ENCODE measurements at regions of chr20 and their contacts with region 1.

Region 1: DNA sequence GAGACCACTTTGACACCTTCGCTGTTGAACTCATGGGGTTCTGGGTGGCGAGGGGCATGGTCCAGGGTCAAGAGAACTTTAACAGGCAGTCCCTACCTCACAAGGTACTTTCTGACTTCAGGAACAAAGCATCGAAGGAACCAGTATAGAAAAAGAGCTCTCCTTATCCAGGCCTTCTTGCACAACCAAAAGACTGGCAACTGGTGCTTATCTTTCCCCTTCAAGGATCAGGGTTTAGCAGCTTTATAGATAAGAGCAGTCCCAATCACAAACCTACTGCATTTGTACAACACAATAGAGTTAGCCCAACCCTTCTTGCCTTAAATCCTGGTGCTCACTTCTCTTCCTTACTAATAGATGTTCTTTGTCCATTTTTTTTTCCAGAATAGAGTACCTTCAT is 116.3 kb downstream of the SNX5 start:
- DNase-seq: no peak
- H3K4me3 ChIP-seq: no peak overlapping the region
- CTCF ChIP-seq: no peak
- POLR2A ChIP-seq: no peak

Region 2: GRCh38 chr20:17889226-17889625 is 36.9 kb after region 1 on chr20:
- intact Hi-C with region 1: loop called (anchors 2 kb)
- DNase-seq: no peak
- H3K4me3 ChIP-seq: no peak overlapping the region
- CTCF ChIP-seq: no peak
- POLR2A ChIP-seq: no peak